ENCODE measurements at regions of chr14 and their contacts with region 1.

Region 1: GRCh38 chr14:34629657-34630529 is at the start of gene SNX6:
- DNase-seq: peak; percentile 70 to 92 (median 83)
- ATAC-seq: peak; percentile 96
- H3K4me3 ChIP-seq: peak within 1 kb of the TSS; percentile 95 to 100
- H3K4me3 Mint-ChIP-seq: peak within 1 kb of the TSS; percentile 94
- H3K27ac ChIP-seq: peak within 1 kb of the TSS; percentile 91 to 96
- H3K27ac Mint-ChIP-seq: peak within 1 kb of the TSS; percentile 93
- H3K4me1 ChIP-seq: peaks cover 20% of the 10 kb centered on the region
- H3K4me1 Mint-ChIP-seq: peaks cover 37% of the 10 kb centered on the region
- H3K27me3 ChIP-seq: no peaks in the 10 kb centered on the region
- H3K27me3 Mint-ChIP-seq: peaks cover 4% of the 10 kb centered on the region
- CTCF ChIP-seq: no peak
- total RNA-seq, gene SNX6: 51.2 to 53.5 TPM

Region 2: GRCh38 chr14:34539407-34540180 is 90.3 kb before region 1 on chr14 and contains the start of gene EAPP:
- CTCF ChIA-PET with region 1: no interaction called
- POLR2A ChIA-PET with region 1: no interaction called
- intact Hi-C with region 1: loop called (anchors 5 kb)
- DNase-seq: peak; percentile 88 to 97 (median 95)
- ATAC-seq: peak; percentile 98
- H3K4me3 ChIP-seq: peak within 1 kb of the TSS; percentile 94 to 95
- H3K4me3 Mint-ChIP-seq: peak within 1 kb of the TSS; percentile 97
- H3K27ac ChIP-seq: peak within 1 kb of the TSS; percentile 96 to 97
- H3K27ac Mint-ChIP-seq: peak within 1 kb of the TSS; percentile 98
- H3K4me1 ChIP-seq: peaks cover 16% of the 10 kb centered on the region
- H3K4me1 Mint-ChIP-seq: peaks cover 34% of the 10 kb centered on the region
- H3K27me3 ChIP-seq: no peaks in the 10 kb centered on the region
- H3K27me3 Mint-ChIP-seq: no peaks in the 10 kb centered on the region
- CTCF ChIP-seq: no peak
- total RNA-seq, gene EAPP: 91.0 to 91.4 TPM

Region 3: GRCh38 chr14:34592623-34593022 is 37.3 kb before region 1 on chr14:
- CTCF ChIA-PET with region 1: no interaction called
- POLR2A ChIA-PET with region 1: no interaction called
- intact Hi-C with region 1: no loop called
- DNase-seq: no peak
- ATAC-seq: no peak
- H3K4me3 ChIP-seq: no peak overlapping the region
- H3K4me3 Mint-ChIP-seq: no peak overlapping the region
- H3K27ac ChIP-seq: no peak overlapping the region
- H3K27ac Mint-ChIP-seq: no peak overlapping the region
- H3K4me1 ChIP-seq: no peaks in the 10 kb centered on the region
- H3K4me1 Mint-ChIP-seq: peaks cover 9% of the 10 kb centered on the region
- H3K27me3 ChIP-seq: no peaks in the 10 kb centered on the region
- H3K27me3 Mint-ChIP-seq: no peaks in the 10 kb centered on the region
- CTCF ChIP-seq: no peak

Measured in CD8-positive, alpha-beta T cell (primary cell).